Activated T-helper 2 cell treated with anti-CD3 and anti-CD28 coated beads, Interferon-gamma antibody, Interleukin-2, Interleukin-4, amounts not matched to agents 10 μg/mL and 5 μg/mL and 100 μg/mL, durations not matched to agents 14 hours and 24 hours and 36 hours (primary cell): ENCODE measurements at regions of chr6 and their contacts with region 1.

Region 1: GRCh38 chr6:56955171-56956045 is 501 bp downstream of the BEND6 start:
- DNase-seq: peak; percentile 54
- H3K4me3 Mint-ChIP-seq: peak overlapping the region; percentile 74
- H3K27ac Mint-ChIP-seq: no peak overlapping the region
- H3K4me1 Mint-ChIP-seq: peaks cover 21% of the 10 kb centered on the region
- H3K27me3 Mint-ChIP-seq: peaks cover 67% of the 10 kb centered on the region

Region 2: GRCh38 chr6:56904068-56904467 is 51.3 kb before region 1 on chr6:
- intact Hi-C with region 1: loop called (anchors 2 kb)
- DNase-seq: no peak
- H3K4me3 Mint-ChIP-seq: no peak overlapping the region
- H3K27ac Mint-ChIP-seq: no peak overlapping the region
- H3K4me1 Mint-ChIP-seq: no peaks in the 10 kb centered on the region
- H3K27me3 Mint-ChIP-seq: peaks cover 22% of the 10 kb centered on the region

Region 3: DNA sequence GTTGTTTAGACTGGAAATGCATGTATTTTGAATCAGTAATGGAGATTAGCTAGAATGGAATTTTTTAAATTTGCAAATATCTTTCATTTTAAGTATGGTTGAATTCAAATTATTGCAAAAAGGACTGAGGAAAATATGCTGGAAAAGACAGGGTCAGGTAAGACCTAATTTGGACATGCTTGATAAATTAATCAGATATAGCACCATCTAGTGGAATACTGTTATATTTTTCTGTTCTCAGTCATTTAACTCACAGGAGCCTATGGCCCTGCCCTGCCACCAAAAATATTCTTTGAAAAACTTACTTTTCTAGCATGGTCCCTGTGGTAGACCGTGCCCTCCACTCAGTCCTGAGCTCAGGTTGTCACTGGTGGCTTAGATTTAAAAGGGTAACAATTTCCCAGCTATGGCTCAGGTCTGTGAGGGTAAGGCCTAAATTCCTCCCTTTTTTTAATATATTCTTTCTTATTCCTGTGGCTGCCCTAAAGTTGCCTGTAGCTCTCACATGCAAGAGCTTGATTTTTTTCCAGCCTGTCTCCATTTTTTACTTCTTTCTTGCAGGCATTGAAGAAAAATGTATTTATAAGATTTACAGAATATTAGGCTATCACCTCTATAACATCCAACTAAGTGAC is 65.8 kb after region 1 on chr6:
- intact Hi-C with region 1: loop called (anchors 5 kb)
- DNase-seq: no peak
- H3K4me3 Mint-ChIP-seq: no peak overlapping the region
- H3K27ac Mint-ChIP-seq: no peak overlapping the region
- H3K4me1 Mint-ChIP-seq: no peaks in the 10 kb centered on the region
- H3K27me3 Mint-ChIP-seq: peaks cover 22% of the 10 kb centered on the region

Region 4: DNA sequence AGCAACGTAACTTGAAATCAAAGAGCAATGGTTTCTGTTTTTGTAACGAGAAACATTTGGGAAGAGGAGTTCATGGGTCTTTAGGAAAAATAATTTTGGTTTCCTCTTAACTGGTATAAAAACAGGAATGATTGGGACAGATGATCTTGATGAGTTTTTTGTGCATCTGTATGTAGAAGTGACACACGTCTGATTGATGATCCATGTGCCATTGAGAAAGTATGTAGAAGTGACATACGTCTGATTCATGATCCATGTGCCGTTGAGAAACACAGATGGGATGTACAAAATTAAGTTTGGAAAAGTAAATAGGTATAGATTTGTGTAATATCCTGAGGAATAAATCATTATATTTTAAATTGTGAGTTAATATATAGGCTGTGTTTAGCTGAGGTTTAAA is 93.2 kb after region 1 on chr6:
- intact Hi-C with region 1: loop called (anchors 5 kb)
- DNase-seq: no peak
- H3K4me3 Mint-ChIP-seq: peak overlapping the region; percentile 79
- H3K27ac Mint-ChIP-seq: peak overlapping the region; percentile 24
- H3K4me1 Mint-ChIP-seq: peaks cover 26% of the 10 kb centered on the region
- H3K27me3 Mint-ChIP-seq: peaks cover 20% of the 10 kb centered on the region

Region 5: DNA sequence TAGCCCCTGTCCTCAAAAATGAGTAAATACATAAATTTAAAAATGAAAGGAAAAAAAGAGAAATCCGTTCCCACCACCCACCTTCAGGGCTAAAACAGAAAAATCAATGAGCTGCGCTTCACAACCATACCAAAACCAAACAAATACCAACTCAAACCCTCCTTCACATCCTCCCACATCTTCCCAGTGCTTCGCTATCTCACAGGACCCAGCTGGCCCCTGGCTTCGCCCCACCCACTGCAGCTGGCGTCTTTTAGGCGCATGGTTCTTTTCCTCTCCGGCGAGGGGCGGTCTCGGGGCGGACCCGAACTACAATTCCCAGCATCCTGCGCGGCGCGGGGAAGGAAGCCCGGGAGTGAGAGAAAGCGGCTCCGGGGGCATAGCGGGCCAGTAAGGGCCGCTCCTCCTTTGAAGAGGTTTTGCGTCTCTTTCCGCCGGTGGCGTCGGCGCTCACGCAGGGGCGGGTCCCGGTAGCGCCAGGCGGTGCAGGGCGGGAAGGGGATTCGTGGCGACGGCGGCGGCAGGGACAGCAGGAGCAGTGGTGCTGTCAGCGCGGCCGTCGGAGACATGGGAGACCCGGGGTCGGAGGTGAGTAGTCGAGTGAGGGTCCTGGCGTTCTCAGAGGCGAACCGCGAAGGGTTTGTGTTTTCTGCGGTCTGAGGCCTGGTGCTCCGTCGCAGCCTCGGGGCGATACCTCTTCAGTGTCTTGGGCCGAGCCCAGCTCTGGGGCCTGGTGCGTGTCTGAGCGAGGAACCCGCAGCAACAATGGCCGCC is 134.5 kb after region 1 on chr6 and contains the start of gene ZNF451:
- intact Hi-C with region 1: loop called (anchors 10 kb)
- DNase-seq: peak; percentile 95
- H3K4me3 Mint-ChIP-seq: peak within 1 kb of the TSS; percentile 73
- H3K27ac Mint-ChIP-seq: peak within 1 kb of the TSS; percentile 81
- H3K4me1 Mint-ChIP-seq: peaks cover 36% of the 10 kb centered on the region
- H3K27me3 Mint-ChIP-seq: no peaks in the 10 kb centered on the region
- total RNA-seq, gene ZNF451: 57.7 and 60.3 TPM in 2 replicates

Region 6: GRCh38 chr6:57147955-57148858 is 192.8 kb after region 1 on chr6:
- intact Hi-C with region 1: loop called (anchors 10 kb)
- DNase-seq: peak; percentile 25
- H3K4me3 Mint-ChIP-seq: peak overlapping the region; percentile 65
- H3K27ac Mint-ChIP-seq: peak overlapping the region; percentile 93
- H3K4me1 Mint-ChIP-seq: peaks cover 37% of the 10 kb centered on the region
- H3K27me3 Mint-ChIP-seq: no peaks in the 10 kb centered on the region

Region 7: DNA sequence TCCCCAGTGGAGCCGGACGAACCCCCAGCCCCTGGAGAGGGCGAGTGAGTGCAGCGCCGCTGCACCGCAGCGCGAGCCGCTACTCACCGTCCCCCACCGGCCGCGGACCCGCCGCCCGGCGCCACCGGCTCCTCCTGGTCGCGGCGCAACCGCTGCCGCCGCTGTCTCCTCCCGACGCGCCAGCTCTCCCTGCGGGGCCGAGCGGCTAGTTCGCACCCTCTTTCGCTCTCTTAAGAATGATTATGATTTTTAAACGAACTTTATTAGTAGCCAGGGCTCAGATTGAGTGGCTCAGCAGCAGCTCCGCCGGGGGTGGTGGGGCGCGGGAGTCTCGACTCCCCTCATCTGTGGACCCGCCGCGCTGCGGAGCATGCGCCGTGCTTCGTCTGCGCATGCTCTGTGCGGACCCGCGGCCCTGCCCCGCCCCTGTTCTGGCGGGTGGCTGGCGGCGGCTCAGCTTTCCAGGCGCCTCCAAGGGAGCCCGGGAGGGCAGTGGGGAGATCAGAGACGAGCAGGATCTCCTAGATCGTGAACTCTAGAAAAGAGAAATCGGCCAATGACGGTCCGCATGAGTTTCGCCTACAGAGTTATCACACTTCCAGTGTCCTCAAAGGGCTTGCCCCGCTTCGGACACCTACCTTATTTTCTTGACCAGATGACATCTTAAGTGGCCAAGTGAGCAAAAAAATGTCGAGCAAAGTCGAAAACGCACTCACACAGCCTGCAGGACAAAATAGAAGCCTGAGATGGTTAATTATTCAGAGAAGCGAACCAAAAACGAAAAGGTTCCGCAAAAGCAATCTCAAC is 266.7 kb after region 1 on chr6 and contains the start of gene RAB23:
- intact Hi-C with region 1: loop called (anchors 2 kb)
- DNase-seq: peak; percentile 82
- H3K4me3 Mint-ChIP-seq: peak within 1 kb of the TSS; percentile 99
- H3K27ac Mint-ChIP-seq: peak within 1 kb of the TSS; percentile 97
- H3K4me1 Mint-ChIP-seq: peaks cover 26% of the 10 kb centered on the region
- H3K27me3 Mint-ChIP-seq: peaks cover 27% of the 10 kb centered on the region
- total RNA-seq, gene RAB23: 4.8 and 5.1 TPM in 2 replicates